ENCODE measurements at regions of chr16 and their contacts with region 1.

Region 1: DNA sequence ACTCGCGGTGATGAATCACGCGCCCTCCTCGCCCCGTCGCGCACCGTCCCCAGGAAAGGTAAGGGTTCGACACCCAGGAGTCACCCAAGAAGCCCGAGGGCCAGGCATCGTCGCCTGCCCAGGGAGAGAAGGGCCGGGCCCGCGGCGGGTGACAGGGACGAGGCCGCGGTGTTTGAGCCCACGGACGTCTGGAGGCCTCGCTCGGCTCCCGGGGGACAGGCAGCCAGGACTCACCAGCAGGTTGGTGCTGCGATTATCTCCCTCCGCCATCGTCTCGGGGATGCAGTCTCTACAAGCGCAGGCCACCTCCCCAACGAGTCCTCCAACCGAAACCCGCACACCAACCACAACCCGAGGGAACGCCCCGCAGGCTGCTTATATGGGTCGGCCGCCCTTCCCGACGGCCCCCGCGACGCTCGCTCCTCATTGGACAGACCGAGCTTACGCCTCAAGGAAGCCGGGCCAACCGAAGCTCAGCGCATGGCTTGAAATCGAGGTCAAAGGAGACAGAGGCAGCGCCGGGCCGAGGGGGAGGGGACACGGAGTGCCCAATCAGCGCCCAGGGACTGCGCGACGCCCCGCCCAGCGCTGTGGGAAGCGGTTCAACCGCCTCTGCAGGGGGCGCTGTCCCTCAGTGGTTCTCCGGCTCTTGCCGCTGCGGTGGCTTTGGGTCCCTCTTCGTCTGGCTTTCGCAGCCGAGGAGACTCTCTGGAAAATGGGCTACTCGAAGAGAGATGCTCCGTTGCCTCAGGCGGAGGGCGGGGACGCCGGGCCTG is at the start of gene ARL6IP1:
- DNase-seq: peak; percentile 95 to 100 (median 99)
- ATAC-seq: peak; percentile 92 to 98 (median 96)
- H3K4me3 ChIP-seq: peak within 1 kb of the TSS; percentile 78 to 96
- H3K4me3 Mint-ChIP-seq: peak within 1 kb of the TSS; percentile 90 to 96 (median 91)
- H3K27ac ChIP-seq: peak within 1 kb of the TSS; percentile 77
- H3K27ac Mint-ChIP-seq: peak within 1 kb of the TSS; percentile 93 to 96
- H3K4me1 ChIP-seq: peaks cover 18 to 38% of the 10 kb centered on the region in 2 experiments
- H3K4me1 Mint-ChIP-seq: peaks cover 50 to 73% (median 72%) of the 10 kb centered on the region in 3 donors
- H3K27me3 ChIP-seq: no peaks in the 10 kb centered on the region
- H3K27me3 Mint-ChIP-seq: no peaks in the 10 kb centered on the region
- total RNA-seq, gene ARL6IP1: 78.8 to 122 (median 89.5) TPM

Region 2: DNA sequence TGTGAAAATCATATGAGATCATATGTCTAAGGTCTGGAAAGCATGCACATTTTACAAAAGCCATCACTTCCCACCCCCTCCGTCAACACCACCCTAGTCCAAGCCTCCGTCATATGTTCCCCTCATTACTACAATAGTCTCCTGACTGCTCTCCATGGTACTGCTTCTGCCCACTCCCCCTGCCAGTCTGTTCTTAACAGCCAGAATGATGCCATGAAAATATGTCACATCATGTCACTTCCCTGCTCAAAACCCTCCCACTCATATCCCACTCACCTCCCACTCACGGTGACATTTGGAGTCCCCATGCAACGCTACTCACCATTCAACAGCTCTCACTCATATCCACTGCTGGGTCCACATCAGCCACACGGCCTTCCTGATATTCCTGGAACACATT is 1763.0 kb before region 1 on chr16:
- CTCF ChIA-PET with region 1: no interaction called
- POLR2A ChIA-PET with region 1: no interaction called
- DNase-seq: no peak
- ATAC-seq: no peak
- H3K4me3 ChIP-seq: no peak overlapping the region
- H3K4me3 Mint-ChIP-seq: no peak overlapping the region
- H3K27ac ChIP-seq: no peak overlapping the region
- H3K27ac Mint-ChIP-seq: no peak overlapping the region
- H3K4me1 ChIP-seq: peaks cover 0 to 11% of the 10 kb centered on the region in 2 experiments
- H3K4me1 Mint-ChIP-seq: no peaks in the 10 kb centered on the region
- H3K27me3 ChIP-seq: no peaks in the 10 kb centered on the region
- H3K27me3 Mint-ChIP-seq: no peaks in the 10 kb centered on the region

Region 3: DNA sequence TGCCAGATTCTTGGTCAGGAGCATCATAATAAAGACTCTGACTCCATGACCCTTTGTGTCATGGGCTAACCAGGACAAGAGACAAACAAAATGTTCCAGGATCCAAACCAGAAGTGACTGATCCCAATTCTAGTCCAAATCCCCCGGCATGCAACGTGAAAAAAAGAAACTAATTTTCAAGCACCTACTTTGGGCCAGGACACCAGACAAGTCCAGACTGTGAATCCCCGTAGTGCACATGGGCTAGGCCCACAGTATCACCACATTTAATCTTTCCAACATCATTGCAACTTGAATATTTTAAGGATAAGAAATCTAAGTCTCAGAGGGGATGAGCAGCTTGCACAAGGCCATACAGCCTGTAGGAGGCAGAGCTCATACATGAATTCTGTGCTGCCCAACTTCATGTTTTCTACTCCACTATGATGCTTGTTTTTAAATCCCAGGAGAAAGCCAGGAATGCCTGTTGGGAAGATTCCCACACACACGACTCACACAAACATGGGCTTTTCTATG is 830.5 kb before region 1 on chr16:
- CTCF ChIA-PET with region 1: no interaction called
- POLR2A ChIA-PET with region 1: no interaction called
- DNase-seq: no peak
- ATAC-seq: no peak
- H3K4me3 ChIP-seq: no peak overlapping the region
- H3K4me3 Mint-ChIP-seq: no peak overlapping the region
- H3K27ac ChIP-seq: no peak overlapping the region
- H3K27ac Mint-ChIP-seq: no peak overlapping the region
- H3K4me1 ChIP-seq: no peaks in the 10 kb centered on the region
- H3K4me1 Mint-ChIP-seq: no peaks in the 10 kb centered on the region
- H3K27me3 ChIP-seq: peaks cover 0 to 4% of the 10 kb centered on the region in 2 experiments
- H3K27me3 Mint-ChIP-seq: peaks cover 11 to 17% of the 10 kb centered on the region in 2 donors

Region 4: DNA sequence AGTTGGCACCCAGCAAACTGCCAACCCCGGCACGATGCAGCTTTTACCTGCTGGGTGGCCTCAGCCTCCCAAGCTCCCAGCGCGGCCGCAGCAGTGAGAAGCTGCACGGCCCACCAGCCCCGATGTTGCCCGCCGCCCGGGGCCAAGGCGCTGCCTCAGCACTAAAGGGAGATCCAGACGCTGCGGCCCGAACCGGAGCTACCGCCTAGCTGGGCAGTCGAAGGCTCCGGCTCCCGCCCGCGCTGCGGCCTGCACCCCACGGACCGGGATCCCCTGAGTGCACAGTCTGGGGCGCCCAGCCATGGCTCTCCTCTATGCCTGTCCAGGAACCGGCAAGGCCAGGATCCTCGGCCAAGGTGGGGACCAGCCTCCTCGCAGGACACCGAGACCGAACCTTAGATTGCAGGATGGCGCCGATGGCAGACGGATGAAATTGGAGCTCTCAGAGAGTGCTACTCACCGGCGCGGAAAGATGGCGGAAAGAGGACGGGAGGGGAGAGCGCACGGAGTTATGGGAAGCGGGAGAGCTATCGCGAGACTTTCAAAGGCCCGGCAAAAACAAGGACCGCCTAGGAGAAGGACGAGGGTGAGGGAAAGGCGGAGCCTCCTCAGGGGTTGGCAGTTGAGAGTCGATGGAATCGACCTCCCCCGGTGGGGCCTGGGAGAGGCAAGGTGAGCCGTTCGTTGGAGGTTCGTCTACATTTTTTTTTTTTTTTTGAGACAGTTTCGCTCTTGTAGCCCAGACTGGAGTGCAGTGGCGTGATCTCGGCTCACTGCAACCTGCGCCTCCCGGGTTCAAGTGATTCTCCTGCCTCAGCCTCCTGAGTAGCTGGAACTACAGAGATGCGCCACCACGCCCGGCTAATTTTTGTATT is 11.3 kb before region 1 on chr16 and contains the start of gene RPS15A:
- CTCF ChIA-PET with region 1: interaction called in 1 of 2 experiments, 86 read pairs
- POLR2A ChIA-PET with region 1: interaction called, 12 to 42 read pairs
- DNase-seq: peak; percentile 79 to 98 (median 93)
- ATAC-seq: peak; percentile 97 to 99 (median 98)
- H3K4me3 ChIP-seq: peak within 1 kb of the TSS; percentile 98
- H3K4me3 Mint-ChIP-seq: peak within 1 kb of the TSS; percentile 90 to 97 (median 96)
- H3K27ac ChIP-seq: peak within 1 kb of the TSS; percentile 69
- H3K27ac Mint-ChIP-seq: peak within 1 kb of the TSS; percentile 83 to 93
- H3K4me1 ChIP-seq: peaks cover 18 to 47% of the 10 kb centered on the region in 2 experiments
- H3K4me1 Mint-ChIP-seq: peaks cover 50 to 52% (median 51%) of the 10 kb centered on the region in 3 donors
- H3K27me3 ChIP-seq: no peaks in the 10 kb centered on the region
- H3K27me3 Mint-ChIP-seq: no peaks in the 10 kb centered on the region
- total RNA-seq, gene RPS15A: 2,862 to 3,462 (median 2,982) TPM

Region 5: DNA sequence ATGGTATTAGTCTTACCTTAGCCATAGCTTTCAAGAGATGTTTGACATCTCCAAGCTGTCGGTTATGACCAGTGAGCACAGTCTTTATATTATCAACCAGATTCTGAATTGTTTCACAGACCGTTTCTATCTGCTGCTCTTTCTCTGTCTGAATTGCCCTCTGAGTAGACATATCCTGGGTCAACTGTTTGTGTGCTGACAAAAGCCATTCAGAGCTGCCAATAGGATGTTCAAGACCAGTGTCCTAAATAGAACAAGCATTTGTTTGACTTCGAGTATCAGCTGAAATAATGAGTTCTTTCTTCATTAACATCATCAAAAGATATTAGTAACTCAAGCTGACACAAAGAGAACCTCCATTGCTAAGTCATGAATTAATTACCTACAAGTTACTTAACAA is 14.9 kb after region 1 on chr16:
- CTCF ChIA-PET with region 1: interaction called in 1 of 2 experiments, 20 read pairs
- POLR2A ChIA-PET with region 1: interaction called, 3 to 7 read pairs
- DNase-seq: no peak
- ATAC-seq: no peak
- H3K4me3 ChIP-seq: no peak overlapping the region
- H3K4me3 Mint-ChIP-seq: no peak overlapping the region
- H3K27ac ChIP-seq: no peak overlapping the region
- H3K27ac Mint-ChIP-seq: peak overlapping the region in 1 of 2 donors; percentile 22
- H3K4me1 ChIP-seq: peaks cover 0 to 9% of the 10 kb centered on the region in 2 experiments
- H3K4me1 Mint-ChIP-seq: peaks cover 14 to 15% (median 15%) of the 10 kb centered on the region in 3 donors
- H3K27me3 ChIP-seq: no peaks in the 10 kb centered on the region
- H3K27me3 Mint-ChIP-seq: no peaks in the 10 kb centered on the region

Region 6: DNA sequence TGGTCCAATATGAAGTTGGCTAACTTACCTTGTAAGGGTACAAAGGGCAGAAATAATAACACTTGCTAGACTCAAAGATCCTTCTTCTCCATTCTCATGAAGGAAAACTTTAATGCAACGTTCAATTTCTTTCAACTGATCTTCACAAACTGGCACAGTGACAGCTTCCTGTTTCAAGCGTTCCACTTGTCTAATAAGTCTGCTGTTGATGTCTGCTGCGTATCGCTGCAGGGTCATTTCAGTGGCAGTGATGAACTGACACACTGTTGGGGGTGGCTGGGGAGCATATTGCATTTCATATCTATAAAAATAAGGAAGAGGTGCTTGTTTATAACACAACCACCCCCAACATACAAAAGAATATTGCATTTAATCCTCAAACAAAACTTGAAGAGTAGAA is 33.5 kb after region 1 on chr16:
- CTCF ChIA-PET with region 1: interaction called, 7 to 12 read pairs
- POLR2A ChIA-PET with region 1: interaction called in 1 of 2 experiments, 4 read pairs
- DNase-seq: no peak
- ATAC-seq: no peak
- H3K4me3 ChIP-seq: no peak overlapping the region
- H3K4me3 Mint-ChIP-seq: no peak overlapping the region
- H3K27ac ChIP-seq: no peak overlapping the region
- H3K27ac Mint-ChIP-seq: peak overlapping the region in 1 of 2 donors; percentile 25
- H3K4me1 ChIP-seq: no peaks in the 10 kb centered on the region
- H3K4me1 Mint-ChIP-seq: no peaks in the 10 kb centered on the region
- H3K27me3 ChIP-seq: no peaks in the 10 kb centered on the region
- H3K27me3 Mint-ChIP-seq: no peaks in the 10 kb centered on the region

Region 7: DNA sequence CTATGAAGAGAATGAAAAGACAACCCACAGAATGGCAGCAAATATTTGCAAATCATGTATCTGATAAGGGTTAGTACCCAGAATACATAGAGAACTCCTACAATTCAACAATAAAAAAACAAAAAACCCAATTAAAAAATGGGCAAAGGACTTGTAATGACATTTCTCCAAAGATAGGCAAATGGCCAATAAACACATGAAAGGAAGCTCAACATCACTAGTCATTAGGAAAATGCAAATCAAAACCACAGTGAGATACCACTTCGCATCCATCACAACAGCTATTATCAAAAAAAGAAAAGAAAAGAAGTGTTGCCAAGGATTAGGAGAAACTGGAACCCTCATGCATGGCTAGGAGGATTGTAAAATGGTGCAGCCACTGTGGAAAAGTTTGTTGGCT is 45.0 kb after region 1 on chr16:
- CTCF ChIA-PET with region 1: interaction called in 1 of 2 experiments, 11 read pairs
- POLR2A ChIA-PET with region 1: interaction called in 1 of 2 experiments, 4 read pairs
- DNase-seq: no peak
- ATAC-seq: no peak
- H3K4me3 ChIP-seq: no peak overlapping the region
- H3K4me3 Mint-ChIP-seq: no peak overlapping the region
- H3K27ac ChIP-seq: no peak overlapping the region
- H3K27ac Mint-ChIP-seq: no peak overlapping the region
- H3K4me1 ChIP-seq: no peaks in the 10 kb centered on the region
- H3K4me1 Mint-ChIP-seq: peaks cover 0 to 1% (median 0%) of the 10 kb centered on the region in 3 donors
- H3K27me3 ChIP-seq: no peaks in the 10 kb centered on the region
- H3K27me3 Mint-ChIP-seq: no peaks in the 10 kb centered on the region

Region 8: GRCh38 chr16:18931756-18932155 is 130.4 kb after region 1 on chr16:
- CTCF ChIA-PET with region 1: no interaction called
- POLR2A ChIA-PET with region 1: no interaction called
- DNase-seq: no peak
- ATAC-seq: no peak
- H3K4me3 ChIP-seq: no peak overlapping the region
- H3K4me3 Mint-ChIP-seq: no peak overlapping the region
- H3K27ac ChIP-seq: no peak overlapping the region
- H3K27ac Mint-ChIP-seq: no peak overlapping the region
- H3K4me1 ChIP-seq: peaks cover 0 to 6% of the 10 kb centered on the region in 2 experiments
- H3K4me1 Mint-ChIP-seq: peaks cover 5 to 6% (median 5%) of the 10 kb centered on the region in 3 donors
- H3K27me3 ChIP-seq: peaks cover 0 to 2% of the 10 kb centered on the region in 2 experiments
- H3K27me3 Mint-ChIP-seq: no peaks in the 10 kb centered on the region